ENCODE measurements at regions of chr13 and their contacts with region 1.

Region 1: DNA sequence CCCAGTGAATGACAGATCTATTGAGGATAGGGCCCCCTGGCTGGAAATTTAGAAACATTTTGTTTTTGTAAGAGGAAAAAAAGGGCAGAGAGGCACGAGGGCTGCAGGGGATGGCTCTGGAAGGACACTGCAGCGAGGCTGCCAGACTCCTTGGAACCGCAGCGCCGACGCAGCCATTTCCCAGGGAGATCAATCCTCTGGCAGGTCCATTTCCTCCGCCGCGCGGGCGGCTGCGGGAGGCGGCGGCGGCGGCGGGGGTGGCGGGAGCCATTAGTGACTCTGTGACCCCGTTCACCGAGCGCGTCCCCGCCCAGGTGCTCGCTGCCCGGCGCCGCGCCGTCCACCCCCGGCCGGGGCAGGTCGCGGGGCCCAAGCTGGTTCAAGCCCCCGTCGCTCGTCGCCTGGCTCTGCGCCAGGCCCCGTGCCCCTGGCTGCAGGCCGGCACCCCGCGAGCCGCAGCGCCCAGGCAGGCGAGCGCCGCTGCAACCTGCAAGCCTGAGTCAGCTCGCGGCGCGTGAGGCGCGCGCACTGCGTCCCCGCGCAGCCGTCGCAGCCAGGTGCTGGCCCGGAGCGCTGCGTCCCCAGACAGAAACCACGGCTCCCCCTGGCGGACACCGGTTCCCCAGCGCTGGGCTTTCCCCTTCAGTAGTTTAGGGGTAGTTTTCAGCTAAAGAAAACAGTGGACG is 192.6 kb downstream of the KATNAL1 start:
- DNase-seq: no peak
- H3K4me3 ChIP-seq: peak overlapping the region; percentile 58
- H3K27ac ChIP-seq: no peak overlapping the region
- H3K27me3 ChIP-seq: peaks cover 5% of the 10 kb centered on the region
- CTCF ChIP-seq: peak; percentile 90

Region 2: GRCh38 chr13:29782798-29783197 is 331.9 kb before region 1 on chr13:
- CTCF ChIA-PET with region 1: interaction called, 16 read pairs
- POLR2A ChIA-PET with region 1: no interaction called
- DNase-seq: no peak
- H3K4me3 ChIP-seq: no peak overlapping the region
- H3K27ac ChIP-seq: no peak overlapping the region
- H3K27me3 ChIP-seq: no peaks in the 10 kb centered on the region
- CTCF ChIP-seq: no peak

Region 3: GRCh38 chr13:29923554-29924481 is 190.9 kb before region 1 on chr13:
- CTCF ChIA-PET with region 1: interaction called, 18 read pairs
- POLR2A ChIA-PET with region 1: interaction called, 3 read pairs
- DNase-seq: peak; percentile 95
- H3K4me3 ChIP-seq: peak overlapping the region; percentile 25; the same call in 1 of the 2 replicates
- H3K27ac ChIP-seq: peak overlapping the region; percentile 99
- H3K27me3 ChIP-seq: no peaks in the 10 kb centered on the region
- CTCF ChIP-seq: peak; percentile 96

Region 4: GRCh38 chr13:30017880-30018279 is 96.8 kb before region 1 on chr13:
- CTCF ChIA-PET with region 1: no interaction called
- POLR2A ChIA-PET with region 1: no interaction called
- DNase-seq: no peak
- H3K4me3 ChIP-seq: no peak overlapping the region
- H3K27ac ChIP-seq: no peak overlapping the region
- H3K27me3 ChIP-seq: peaks cover 5% of the 10 kb centered on the region
- CTCF ChIP-seq: no peak

Region 5: DNA sequence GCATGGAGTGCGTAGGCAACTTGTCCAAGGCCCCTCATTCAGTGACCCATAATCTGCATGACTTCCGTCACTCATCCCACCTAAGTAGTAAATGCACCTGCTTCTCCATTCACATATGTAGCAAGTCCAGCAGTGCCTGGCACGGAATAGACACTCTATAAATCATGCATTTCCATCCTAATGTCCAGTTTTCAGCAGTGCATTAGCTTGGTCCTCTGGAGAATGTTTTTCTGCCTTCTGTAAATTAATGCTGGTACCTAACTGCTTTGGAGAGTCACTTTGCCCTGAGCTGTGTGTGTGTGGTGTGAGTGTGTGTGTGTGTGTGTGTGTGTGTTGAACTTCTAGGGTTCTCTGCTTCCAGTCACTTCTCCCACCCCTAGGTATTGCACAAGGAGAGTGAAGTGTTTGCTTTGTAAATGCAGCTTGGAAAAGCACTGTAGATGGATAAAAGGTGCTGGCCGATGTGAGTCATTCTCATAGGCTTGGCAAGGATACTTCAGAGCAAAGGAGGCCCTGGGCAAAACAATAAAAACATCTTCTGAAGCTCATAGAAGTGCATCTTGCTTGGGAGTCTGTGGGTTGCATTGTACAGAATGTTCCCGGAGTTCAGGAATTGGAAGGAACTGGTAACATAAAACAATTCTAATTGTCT is 10.8 kb after region 1 on chr13:
- CTCF ChIA-PET with region 1: interaction called, 15 read pairs
- POLR2A ChIA-PET with region 1: no interaction called
- DNase-seq: peak; percentile 78
- H3K4me3 ChIP-seq: no peak overlapping the region
- H3K27ac ChIP-seq: no peak overlapping the region
- H3K27me3 ChIP-seq: no peaks in the 10 kb centered on the region
- CTCF ChIP-seq: no peak